ENCODE measurements at regions of chr22 and their contacts with region 1.

Region 1: DNA sequence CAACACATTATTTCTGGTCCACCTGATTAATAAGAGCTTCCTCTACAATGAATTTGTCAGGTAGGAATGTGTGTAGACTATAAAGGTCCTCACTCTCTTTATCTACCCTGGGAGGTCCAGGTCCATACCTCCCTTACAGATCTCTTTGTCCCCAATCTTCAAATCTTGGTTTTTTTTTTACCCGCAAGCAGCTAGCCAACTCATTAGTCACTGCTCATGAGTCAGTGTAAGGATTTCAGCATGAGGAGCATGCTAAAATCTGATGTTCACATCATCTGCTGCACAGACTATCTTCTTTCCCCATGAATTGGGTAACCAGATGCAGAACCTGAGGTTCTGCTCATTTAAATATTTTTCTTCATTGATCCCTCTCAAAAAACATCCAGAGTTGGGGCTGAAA is 397.0 kb upstream of the ISX start:
- DNase-seq: no peak
- ATAC-seq: no peak
- H3K4me3 ChIP-seq: no peak overlapping the region
- H3K27ac ChIP-seq: no peak overlapping the region
- H3K4me1 ChIP-seq: no peaks in the 10 kb centered on the region
- H3K27me3 ChIP-seq: no peaks in the 10 kb centered on the region
- CTCF ChIP-seq: no peak
- EP300 ChIP-seq: no peak
- POLR2A ChIP-seq: no peak
- RAD21 ChIP-seq: no peak

Region 2: GRCh38 chr22:34608540-34609115 is 60.4 kb before region 1 on chr22:
- CTCF ChIA-PET with region 1: no interaction called
- POLR2A ChIA-PET with region 1: no interaction called
- RAD21 ChIA-PET with region 1: no interaction called
- SMC1A ChIA-PET with region 1: no interaction called
- in situ Hi-C with region 1: loop called (anchors 10 kb)
- intact Hi-C with region 1: no loop called
- DNase-seq: no peak
- ATAC-seq: no peak
- H3K4me3 ChIP-seq: no peak overlapping the region
- H3K27ac ChIP-seq: no peak overlapping the region
- H3K4me1 ChIP-seq: no peaks in the 10 kb centered on the region
- H3K27me3 ChIP-seq: no peaks in the 10 kb centered on the region
- CTCF ChIP-seq: no peak
- EP300 ChIP-seq: no peak
- POLR2A ChIP-seq: no peak
- RAD21 ChIP-seq: no peak

Region 3: DNA sequence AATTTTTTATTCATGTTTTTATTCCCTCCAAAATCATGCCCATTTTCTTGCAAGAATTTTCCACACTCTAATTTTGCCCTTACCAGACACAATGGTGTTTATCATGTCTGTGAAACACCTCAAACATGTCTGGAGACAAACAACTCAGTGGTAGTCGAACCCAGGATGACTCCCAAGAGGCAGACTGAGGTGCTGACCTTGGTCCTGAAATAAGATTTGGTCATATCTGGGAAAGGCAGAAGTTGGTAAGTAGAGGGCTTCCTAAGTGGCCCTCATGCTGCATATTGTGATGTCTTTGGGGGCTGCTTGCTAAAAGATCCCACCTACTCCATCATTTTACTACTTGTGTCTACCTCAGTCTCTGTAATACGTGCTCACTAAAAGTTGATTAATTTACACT is 27.6 kb after region 1 on chr22:
- CTCF ChIA-PET with region 1: no interaction called
- POLR2A ChIA-PET with region 1: no interaction called
- RAD21 ChIA-PET with region 1: no interaction called
- SMC1A ChIA-PET with region 1: no interaction called
- in situ Hi-C with region 1: no loop called
- intact Hi-C with region 1: no loop called
- DNase-seq: no peak
- ATAC-seq: no peak
- H3K4me3 ChIP-seq: no peak overlapping the region
- H3K27ac ChIP-seq: no peak overlapping the region
- H3K4me1 ChIP-seq: no peaks in the 10 kb centered on the region
- H3K27me3 ChIP-seq: no peaks in the 10 kb centered on the region
- CTCF ChIP-seq: no peak
- EP300 ChIP-seq: no peak
- POLR2A ChIP-seq: no peak
- RAD21 ChIP-seq: no peak